ENCODE measurements at regions of chr15 and their contacts with region 1.

Region 1: GRCh38 chr15:68536331-68537095 is 42.3 kb upstream of the CORO2B start:
- DNase-seq: no peak
- CTCF ChIP-seq: no peak

Region 2: DNA sequence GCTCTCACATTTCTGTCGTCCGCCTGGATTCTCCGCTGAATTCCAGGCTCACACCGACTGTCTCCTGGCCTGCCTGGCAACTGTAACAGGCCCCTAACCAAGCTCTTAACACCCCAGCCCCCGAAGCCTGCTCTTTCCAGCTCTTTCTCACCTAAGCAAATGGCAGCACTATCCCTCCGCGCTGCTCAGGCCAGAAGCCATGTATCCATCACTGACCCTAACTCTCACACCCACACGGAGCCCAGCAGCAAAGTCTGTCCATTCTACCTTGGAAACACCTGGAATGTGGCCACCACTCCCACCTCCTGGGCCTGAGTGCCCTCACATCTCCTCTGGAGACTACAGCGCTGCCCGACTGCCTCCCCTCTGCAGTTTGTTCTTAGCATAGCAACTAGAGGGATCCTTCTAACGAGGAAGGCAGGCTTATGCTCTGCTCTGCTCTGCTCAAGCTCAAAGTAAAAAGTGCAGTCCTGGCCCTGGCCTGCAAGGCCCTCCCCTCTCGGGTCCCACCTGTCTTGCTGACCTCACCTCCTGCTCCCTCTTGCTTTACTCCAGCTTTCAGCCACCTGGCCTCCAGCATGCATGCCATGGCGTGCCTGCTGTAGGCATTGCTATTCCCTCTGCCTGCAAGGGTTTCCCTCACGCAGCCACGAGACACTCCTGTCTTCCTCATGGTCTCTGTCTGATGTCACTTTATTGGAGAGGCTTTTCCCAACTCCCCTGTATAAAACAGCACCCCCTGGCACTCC is 231.8 kb before region 1 on chr15:
- in situ Hi-C with region 1: loop called (anchors 10 kb)
- DNase-seq: peak; percentile 3
- CTCF ChIP-seq: no peak

Region 3: GRCh38 chr15:68768321-68768720 is 231.8 kb after region 1 on chr15:
- in situ Hi-C with region 1: no loop called
- DNase-seq: no peak
- CTCF ChIP-seq: no peak

Measured in GM13977 (cell line).